ENCODE measurements at regions of chr11 and their contacts with region 1.

Region 1: DNA sequence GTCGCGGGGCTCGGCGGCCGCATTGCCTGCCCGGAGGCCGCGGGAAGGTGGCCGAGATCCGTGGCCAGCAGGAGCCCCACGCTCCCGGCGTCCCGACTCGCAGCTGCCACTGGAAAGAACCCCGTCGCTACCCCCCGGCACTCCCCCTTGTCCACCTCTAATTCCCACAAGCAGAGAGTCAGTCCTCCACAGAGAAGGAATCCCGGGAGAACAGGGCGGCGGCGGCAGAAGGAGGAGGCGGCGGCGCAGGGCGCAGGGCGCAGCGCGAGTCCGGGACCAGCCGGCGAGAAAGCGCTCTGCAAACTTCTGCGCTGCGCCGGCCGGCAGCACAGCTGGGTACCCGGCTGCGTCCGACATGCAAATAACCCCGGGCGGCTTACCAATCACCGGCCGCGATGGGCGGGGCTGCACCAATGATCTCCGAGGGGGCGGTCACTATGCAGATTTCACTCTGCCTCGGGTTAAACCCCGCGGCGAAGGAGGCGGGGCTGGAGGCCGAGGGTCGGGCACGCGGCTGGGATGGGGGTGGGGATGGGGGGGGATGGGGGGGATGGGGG is at the start of gene ABTB2:
- DNase-seq: peak; percentile 90 to 97 (median 97)
- ATAC-seq: peak; percentile 96
- H3K4me3 ChIP-seq: peak within 1 kb of the TSS; percentile 67
- H3K4me3 Mint-ChIP-seq: peak within 1 kb of the TSS; percentile 81 to 96 (median 88)
- H3K27ac ChIP-seq: peak within 1 kb of the TSS; percentile 55
- H3K27ac Mint-ChIP-seq: peak within 1 kb of the TSS; percentile 28 to 94 (median 90)
- H3K4me1 ChIP-seq: peaks cover 8 to 10% of the 10 kb centered on the region in 2 donors
- H3K4me1 Mint-ChIP-seq: peaks cover 8 to 28% (median 21%) of the 10 kb centered on the region in 7 donors
- H3K27me3 ChIP-seq: peaks cover 7 to 13% of the 10 kb centered on the region in 2 donors
- H3K27me3 Mint-ChIP-seq: peaks cover 26 to 59% (median 36%) of the 10 kb centered on the region in 5 donors
- total RNA-seq, gene ABTB2: 0.22 to 5.3 (median 0.61) TPM

Region 2: DNA sequence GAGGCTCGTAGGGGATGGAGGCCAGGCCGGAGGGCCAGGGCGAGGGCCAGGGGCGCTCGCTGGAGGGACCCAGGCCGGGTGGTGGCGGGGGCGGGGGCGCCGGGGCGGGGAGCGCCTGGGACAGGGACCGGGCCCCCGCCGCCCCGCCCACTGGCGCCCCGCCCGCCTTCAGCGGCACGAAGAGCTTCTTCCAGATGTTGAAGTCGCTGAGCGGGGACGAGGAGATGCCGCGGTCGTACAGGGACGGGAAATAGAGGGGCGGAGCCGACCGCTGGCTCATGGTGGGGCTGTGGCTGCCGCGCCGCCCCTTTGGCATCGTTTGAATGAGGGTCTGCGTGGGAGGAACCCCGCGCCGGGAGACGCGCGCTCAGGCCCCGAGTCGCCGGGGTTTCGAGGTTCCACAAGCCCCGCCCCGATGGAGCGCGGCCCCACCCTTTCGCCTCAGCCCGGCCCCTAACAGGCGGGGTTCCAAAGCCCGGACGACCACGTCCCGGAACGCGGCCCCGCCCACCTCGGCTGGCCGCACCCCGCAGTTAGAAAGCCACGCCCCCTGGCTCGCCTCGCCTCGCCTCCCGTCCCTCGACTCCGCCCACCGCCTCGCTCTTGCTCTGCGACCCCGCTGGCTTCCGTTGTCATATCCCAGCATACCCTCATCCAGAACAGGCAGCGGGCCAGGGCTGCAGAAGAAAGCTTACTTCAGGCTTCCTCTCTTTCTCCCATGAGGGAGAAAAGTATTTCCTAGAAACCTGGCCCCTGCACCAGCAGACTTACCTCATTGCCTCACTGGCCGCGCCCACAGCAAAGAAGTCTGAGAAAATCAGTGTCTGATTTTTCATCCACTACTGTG is 657.1 kb before region 1 on chr11 and contains the start of gene C11orf91:
- CTCF ChIA-PET with region 1: no interaction called
- POLR2A ChIA-PET with region 1: no interaction called
- intact Hi-C with region 1: loop called (anchors 1 to 5 kb)
- DNase-seq: peak; percentile 88 to 98 (median 95)
- ATAC-seq: peak; percentile 99
- H3K4me3 ChIP-seq: peak within 1 kb of the TSS; percentile 54
- H3K4me3 Mint-ChIP-seq: peak within 1 kb of the TSS; percentile 84 to 96 (median 92)
- H3K27ac ChIP-seq: no peak within 1 kb of the TSS
- H3K27ac Mint-ChIP-seq: peak within 1 kb of the TSS; percentile 61 to 84 (median 76)
- H3K4me1 ChIP-seq: peaks cover 9 to 13% of the 10 kb centered on the region in 2 donors
- H3K4me1 Mint-ChIP-seq: peaks cover 14 to 27% (median 23%) of the 10 kb centered on the region in 7 donors
- H3K27me3 ChIP-seq: no peaks in the 10 kb centered on the region
- H3K27me3 Mint-ChIP-seq: peaks cover 0 to 31% (median 5%) of the 10 kb centered on the region in 5 donors
- total RNA-seq, gene C11orf91: not detected

Region 3: GRCh38 chr11:33857933-33858371 is 499.8 kb before region 1 on chr11:
- CTCF ChIA-PET with region 1: interaction called, 3 read pairs
- POLR2A ChIA-PET with region 1: no interaction called
- intact Hi-C with region 1: loop called (anchors 1 kb)
- DNase-seq: peak; percentile 41 to 75 (median 63)
- ATAC-seq: peak; percentile 96
- H3K4me3 ChIP-seq: no peak overlapping the region
- H3K4me3 Mint-ChIP-seq: no peak overlapping the region
- H3K27ac ChIP-seq: no peak overlapping the region
- H3K27ac Mint-ChIP-seq: no peak overlapping the region
- H3K4me1 ChIP-seq: no peaks in the 10 kb centered on the region
- H3K4me1 Mint-ChIP-seq: peaks cover 0 to 2% (median 0%) of the 10 kb centered on the region in 7 donors
- H3K27me3 ChIP-seq: no peaks in the 10 kb centered on the region
- H3K27me3 Mint-ChIP-seq: peaks cover 25 to 74% (median 50%) of the 10 kb centered on the region in 5 donors

Region 4: DNA sequence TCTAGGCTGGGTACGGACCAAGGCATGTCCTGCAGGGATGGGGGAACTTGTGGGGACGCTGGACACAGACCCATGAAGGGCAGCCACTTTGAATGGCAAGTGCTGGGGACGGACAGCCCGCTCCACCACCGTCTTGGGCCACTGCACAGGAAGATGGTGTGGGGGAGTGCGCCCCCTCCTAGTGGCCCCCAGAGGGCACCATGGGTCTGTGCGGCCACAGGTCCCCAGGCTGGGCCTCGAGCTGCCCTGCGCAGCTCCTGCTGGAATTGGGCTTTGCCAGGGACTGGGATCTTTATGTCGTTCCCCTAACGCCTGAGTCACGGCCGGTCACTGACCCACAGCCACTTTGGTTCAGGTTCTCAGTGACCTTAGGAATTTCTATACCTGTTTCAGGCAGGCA is 208.0 kb before region 1 on chr11:
- CTCF ChIA-PET with region 1: interaction called, 3 read pairs
- POLR2A ChIA-PET with region 1: no interaction called
- intact Hi-C with region 1: loop called in 1 of 2 experiments (anchors 1 kb)
- DNase-seq: no peak
- ATAC-seq: no peak
- H3K4me3 ChIP-seq: no peak overlapping the region
- H3K4me3 Mint-ChIP-seq: no peak overlapping the region
- H3K27ac ChIP-seq: no peak overlapping the region
- H3K27ac Mint-ChIP-seq: no peak overlapping the region
- H3K4me1 ChIP-seq: no peaks in the 10 kb centered on the region
- H3K4me1 Mint-ChIP-seq: peaks cover 0 to 9% (median 6%) of the 10 kb centered on the region in 7 donors
- H3K27me3 ChIP-seq: no peaks in the 10 kb centered on the region
- H3K27me3 Mint-ChIP-seq: no peaks in the 10 kb centered on the region

Region 5: DNA sequence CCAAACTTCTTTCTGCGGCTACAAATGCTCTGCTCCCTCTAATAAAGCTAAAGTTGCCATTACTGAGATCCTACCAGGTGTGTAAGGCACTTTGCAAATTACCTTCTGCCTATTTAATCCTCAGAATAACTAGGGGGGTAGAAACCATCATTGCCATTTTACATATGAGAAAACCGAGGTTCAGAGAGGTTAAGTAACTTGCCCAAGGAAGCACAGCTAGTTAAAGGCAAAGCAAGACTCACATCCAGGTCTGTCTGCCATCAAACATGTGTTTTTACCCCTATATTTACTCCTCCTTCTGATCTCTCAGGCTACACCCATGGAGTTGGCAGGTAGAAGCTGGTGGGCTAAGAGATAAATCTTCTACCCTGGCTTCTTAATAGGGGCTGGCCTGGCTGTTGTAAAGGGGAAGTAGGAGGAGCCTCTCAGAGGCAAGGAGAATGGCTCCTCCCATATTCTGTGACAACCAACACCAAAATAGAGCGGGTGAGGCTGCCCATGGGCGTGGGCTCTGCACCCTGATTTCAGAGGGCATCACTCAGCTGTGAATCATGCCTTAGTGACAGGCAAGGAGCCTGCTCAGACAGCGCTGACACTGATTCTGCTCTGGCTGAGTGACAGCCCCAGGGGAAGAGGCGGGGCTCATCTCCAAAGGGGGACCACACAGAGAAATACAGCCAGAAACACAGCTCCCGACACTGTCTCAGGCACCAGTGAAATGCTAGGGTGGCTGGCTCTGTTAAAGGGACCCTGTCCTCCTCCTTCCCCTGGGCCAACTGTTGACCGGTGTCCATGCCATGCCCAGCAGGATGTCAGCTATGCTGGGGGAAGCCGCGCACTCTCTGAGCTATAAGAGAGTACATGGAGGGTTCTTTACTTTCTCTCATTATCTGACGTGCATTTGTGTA is 106.8 kb before region 1 on chr11:
- CTCF ChIA-PET with region 1: interaction called, 5 read pairs
- POLR2A ChIA-PET with region 1: interaction called, 9 read pairs
- intact Hi-C with region 1: loop called (anchors 1 to 2 kb)
- DNase-seq: peak; percentile 24 to 79 (median 58)
- ATAC-seq: peak; percentile 94
- H3K4me3 ChIP-seq: peak overlapping the region; percentile 40
- H3K4me3 Mint-ChIP-seq: peak overlapping the region; percentile 35 to 85 (median 78)
- H3K27ac ChIP-seq: no peak overlapping the region
- H3K27ac Mint-ChIP-seq: peak overlapping the region; percentile 12 to 79 (median 55)
- H3K4me1 ChIP-seq: peaks cover 36 to 51% of the 10 kb centered on the region in 2 donors
- H3K4me1 Mint-ChIP-seq: peaks cover 36 to 67% (median 58%) of the 10 kb centered on the region in 7 donors
- H3K27me3 ChIP-seq: no peaks in the 10 kb centered on the region
- H3K27me3 Mint-ChIP-seq: peaks cover 0 to 20% (median 0%) of the 10 kb centered on the region in 5 donors

Region 6: DNA sequence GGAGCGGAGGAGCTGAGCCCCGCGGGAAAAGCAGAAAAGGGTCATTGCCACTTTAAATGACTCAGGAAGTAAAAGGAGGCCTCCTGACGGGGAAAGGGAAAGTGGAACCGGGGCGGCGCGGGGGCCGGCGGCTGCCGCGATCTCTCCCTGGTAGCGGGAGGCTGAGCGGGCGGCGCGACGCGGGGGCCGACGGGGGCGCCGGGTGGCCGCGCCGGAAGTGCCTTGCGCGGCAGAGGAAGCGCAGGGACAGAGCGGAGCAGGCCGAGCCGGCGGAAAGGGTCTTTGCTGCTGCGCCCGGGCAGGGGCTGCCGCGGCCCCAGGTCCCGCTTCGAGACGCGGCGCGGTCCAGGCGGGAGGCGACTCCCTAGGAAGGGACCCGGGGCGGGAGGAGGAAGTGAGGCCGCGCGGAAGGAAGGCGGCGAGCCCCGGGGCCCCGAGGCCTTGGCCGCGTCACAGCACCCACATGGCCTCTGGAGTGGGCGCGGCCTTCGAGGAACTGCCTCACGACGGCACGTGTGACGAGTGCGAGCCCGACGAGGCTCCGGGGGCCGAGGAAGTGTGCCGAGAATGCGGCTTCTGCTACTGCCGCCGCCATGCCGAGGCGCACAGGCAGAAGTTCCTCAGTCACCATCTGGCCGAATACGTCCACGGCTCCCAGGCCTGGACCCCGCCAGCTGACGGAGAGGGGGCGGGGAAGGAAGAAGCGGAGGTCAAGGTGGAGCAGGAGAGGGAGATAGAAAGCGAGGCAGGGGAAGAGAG is 1305.0 kb after region 1 on chr11 and contains the start of gene TRIM44:
- CTCF ChIA-PET with region 1: no interaction called
- POLR2A ChIA-PET with region 1: no interaction called
- intact Hi-C with region 1: loop called in 1 of 2 experiments (anchors 2 kb)
- DNase-seq: peak; percentile 69 to 85 (median 82)
- ATAC-seq: peak; percentile 89
- H3K4me3 ChIP-seq: peak within 1 kb of the TSS; percentile 94
- H3K4me3 Mint-ChIP-seq: peak within 1 kb of the TSS; percentile 91 to 99 (median 95)
- H3K27ac ChIP-seq: peak within 1 kb of the TSS; percentile 94
- H3K27ac Mint-ChIP-seq: peak within 1 kb of the TSS; percentile 90 to 100 (median 96)
- H3K4me1 ChIP-seq: peaks cover 21 to 22% of the 10 kb centered on the region in 2 donors
- H3K4me1 Mint-ChIP-seq: peaks cover 24 to 61% (median 55%) of the 10 kb centered on the region in 7 donors
- H3K27me3 ChIP-seq: no peaks in the 10 kb centered on the region
- H3K27me3 Mint-ChIP-seq: peaks cover 0 to 22% (median 5%) of the 10 kb centered on the region in 5 donors
- total RNA-seq, gene TRIM44: 35.7 to 60.8 (median 58.6) TPM

Measured in naive thymus-derived CD4-positive, alpha-beta T cell (primary cell).